Heart right ventricle (tissue), 16 donors: ENCODE measurements at regions of chr11 and their contacts with region 1.

Region 1: DNA sequence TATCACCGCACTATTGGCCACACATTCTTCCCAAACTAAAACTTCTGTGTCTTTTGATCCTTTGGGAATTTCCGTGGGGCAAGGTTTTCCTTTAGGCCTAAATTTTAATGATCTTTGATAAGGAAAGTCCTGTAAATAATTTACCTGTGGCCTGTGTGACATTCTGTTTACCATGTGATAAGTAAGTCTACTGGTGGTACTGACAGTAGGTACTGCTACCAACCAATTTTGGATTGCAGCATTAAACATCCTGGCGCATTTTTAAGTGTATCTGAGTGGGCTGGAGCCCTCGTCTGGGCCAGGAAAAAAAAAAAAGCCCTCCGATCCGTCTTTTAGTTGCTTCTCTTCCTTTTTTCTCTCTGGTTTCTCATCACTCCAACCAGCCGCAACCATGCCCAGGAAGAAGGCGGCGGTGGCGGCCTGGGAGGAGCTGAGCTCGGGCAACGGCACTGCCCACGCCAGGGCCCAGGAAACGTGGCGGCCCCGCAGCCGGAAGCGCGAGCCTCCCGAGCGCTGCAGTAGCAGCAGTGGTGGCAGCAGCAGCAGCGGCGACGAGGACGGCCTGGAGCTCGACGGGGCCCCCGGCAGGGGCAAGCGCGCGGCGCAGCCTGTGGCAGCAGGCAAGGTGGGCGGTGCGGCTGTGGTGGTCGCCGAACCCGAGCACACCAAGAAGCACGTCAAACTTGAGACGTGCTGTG is 33.6 kb downstream of the ASRGL1 start:
- DNase-seq: peak in 1 of 2 donors; percentile 37
- ATAC-seq: no peak
- H3K4me3 ChIP-seq: peak overlapping the region in 2 of 10 donors; percentile 16 to 30
- H3K27ac ChIP-seq: peak overlapping the region in 1 of 10 donors; percentile 66
- H3K4me1 ChIP-seq: peaks cover 0 to 9% (median 0%) of the 10 kb centered on the region in 9 donors
- H3K27me3 ChIP-seq: no peaks in the 10 kb centered on the region
- CTCF ChIP-seq: no peak

Region 2: DNA sequence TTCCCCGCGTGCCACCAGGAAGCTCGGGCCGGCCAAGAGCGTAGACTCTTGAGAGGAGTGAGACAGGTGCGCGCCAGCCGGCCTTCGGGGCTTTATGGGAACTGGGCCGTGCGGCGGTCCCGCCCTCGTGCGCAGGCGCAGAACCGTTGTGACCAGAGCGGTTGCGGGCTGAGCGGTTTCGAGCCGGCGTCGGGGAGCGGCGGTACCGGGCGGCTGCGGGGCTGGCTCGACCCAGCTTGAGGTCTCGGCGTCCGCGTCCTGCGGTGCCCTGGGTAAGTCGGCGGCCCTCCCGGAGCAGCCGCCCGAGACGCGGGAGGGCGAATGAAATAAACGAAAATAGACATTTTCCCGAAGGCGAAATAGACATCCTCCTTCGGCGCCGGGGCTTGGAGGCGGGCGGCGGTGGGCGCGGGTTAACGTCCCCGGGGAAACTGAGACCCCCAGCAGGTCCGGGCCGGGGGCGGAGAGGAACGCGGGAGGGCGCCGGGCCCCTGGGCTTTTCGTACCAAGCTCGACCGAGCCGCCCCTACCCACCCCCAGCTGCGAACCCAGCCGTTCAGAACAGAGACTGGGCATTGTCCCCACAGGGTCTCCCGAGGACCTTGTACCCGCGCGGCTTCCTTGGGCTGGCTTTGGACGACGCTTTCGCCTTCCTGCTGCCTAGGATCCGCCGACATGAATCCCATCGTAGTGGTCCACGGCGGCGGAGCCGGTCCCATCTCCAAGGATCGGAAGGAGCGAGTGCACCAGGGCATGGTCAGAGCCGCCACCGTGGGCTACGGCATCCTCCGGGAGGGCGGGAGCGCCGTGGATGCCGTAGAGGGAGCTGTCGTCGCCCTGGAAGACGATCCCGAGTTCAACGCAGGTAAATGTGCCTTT is 33.4 kb before region 1 on chr11 and contains the start of gene ASRGL1:
- intact Hi-C with region 1: loop called in 4 of 10 experiments (anchors 5 kb)
- DNase-seq: peak; percentile 85 to 90
- ATAC-seq: peak; percentile 92 to 95 (median 94)
- H3K4me3 ChIP-seq: peak within 1 kb of the TSS; percentile 51 to 86 (median 74)
- H3K27ac ChIP-seq: peak within 1 kb of the TSS in 8 of 10 donors; percentile 24 to 82 (median 56)
- H3K4me1 ChIP-seq: peaks cover 0 to 66% (median 12%) of the 10 kb centered on the region in 9 donors
- H3K27me3 ChIP-seq: peaks cover 0 to 26% (median 0%) of the 10 kb centered on the region in 7 donors
- CTCF ChIP-seq: no peak
- total RNA-seq, gene ASRGL1: 1.3 to 9.1 (median 2.6) TPM

Region 3: GRCh38 chr11:62345861-62346260 is 25.0 kb before region 1 on chr11:
- intact Hi-C with region 1: loop called in 1 of 10 experiments (anchors 1 kb)
- DNase-seq: no peak
- ATAC-seq: no peak
- H3K4me3 ChIP-seq: no peak overlapping the region
- H3K27ac ChIP-seq: no peak overlapping the region
- H3K4me1 ChIP-seq: peaks cover 0 to 39% (median 0%) of the 10 kb centered on the region in 9 donors
- H3K27me3 ChIP-seq: no peaks in the 10 kb centered on the region
- CTCF ChIP-seq: no peak